B cell (primary cell): ENCODE measurements at regions of chr12 and their contacts with region 1.

Region 1: DNA sequence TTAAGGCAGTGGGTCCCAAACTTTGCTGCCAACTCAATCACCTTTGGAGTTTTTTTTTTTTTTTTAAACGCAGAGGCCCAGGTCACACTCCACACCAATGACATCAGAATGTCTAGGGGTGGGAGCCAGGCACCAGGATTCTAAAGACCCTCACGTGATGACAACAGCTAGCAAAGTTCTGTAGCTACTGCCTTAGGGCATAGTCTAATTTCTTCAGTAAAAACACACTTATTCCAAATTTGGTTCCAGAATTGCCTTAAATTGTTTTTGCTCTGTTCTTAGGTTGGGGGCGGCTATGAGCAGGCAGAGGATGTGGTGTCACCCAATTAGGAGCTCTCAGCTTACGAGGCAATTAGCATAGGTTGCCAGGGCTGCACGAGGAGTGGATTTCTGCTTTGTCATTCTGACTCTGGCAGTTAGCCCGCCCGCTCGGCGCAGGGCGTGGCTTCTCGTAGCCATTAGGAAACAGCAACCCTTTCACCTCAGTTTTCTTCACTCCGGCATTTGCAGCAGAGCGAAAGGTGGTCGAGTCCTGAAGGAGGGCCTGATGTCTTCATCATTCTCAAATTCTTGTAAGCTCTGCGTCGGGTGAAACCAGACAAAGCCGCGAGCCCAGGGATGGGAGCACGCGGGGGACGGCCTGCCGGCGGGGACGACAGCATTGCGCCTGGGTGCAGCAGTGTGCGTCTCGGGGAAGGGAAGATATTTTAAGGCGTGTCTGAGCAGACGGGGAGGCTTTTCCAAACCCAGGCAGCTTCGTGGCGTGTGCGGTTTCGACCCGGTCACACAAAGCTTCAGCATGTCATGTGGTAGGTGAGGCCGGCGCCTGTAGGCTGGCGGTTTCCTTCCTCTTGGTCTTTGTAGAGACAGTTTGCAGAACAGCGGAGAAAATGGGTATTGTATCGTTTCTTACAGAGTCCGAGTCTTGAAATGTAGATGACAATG is 16.7 kb upstream of the EID3 start:
- DNase-seq: peak; percentile 90
- ATAC-seq: peak; percentile 83
- H3K4me3 ChIP-seq: peak overlapping the region; percentile 61 to 93 (median 82)
- H3K4me3 Mint-ChIP-seq: peak overlapping the region; percentile 100
- H3K27ac ChIP-seq: peak overlapping the region; percentile 75 to 79
- H3K27ac Mint-ChIP-seq: peak overlapping the region; percentile 99
- H3K4me1 ChIP-seq: peaks cover 25 to 29% of the 10 kb centered on the region in 2 donors
- H3K4me1 Mint-ChIP-seq: peaks cover 37% of the 10 kb centered on the region
- H3K27me3 ChIP-seq: no peaks in the 10 kb centered on the region
- H3K27me3 Mint-ChIP-seq: no peaks in the 10 kb centered on the region
- CTCF ChIP-seq: no peak

Region 2: DNA sequence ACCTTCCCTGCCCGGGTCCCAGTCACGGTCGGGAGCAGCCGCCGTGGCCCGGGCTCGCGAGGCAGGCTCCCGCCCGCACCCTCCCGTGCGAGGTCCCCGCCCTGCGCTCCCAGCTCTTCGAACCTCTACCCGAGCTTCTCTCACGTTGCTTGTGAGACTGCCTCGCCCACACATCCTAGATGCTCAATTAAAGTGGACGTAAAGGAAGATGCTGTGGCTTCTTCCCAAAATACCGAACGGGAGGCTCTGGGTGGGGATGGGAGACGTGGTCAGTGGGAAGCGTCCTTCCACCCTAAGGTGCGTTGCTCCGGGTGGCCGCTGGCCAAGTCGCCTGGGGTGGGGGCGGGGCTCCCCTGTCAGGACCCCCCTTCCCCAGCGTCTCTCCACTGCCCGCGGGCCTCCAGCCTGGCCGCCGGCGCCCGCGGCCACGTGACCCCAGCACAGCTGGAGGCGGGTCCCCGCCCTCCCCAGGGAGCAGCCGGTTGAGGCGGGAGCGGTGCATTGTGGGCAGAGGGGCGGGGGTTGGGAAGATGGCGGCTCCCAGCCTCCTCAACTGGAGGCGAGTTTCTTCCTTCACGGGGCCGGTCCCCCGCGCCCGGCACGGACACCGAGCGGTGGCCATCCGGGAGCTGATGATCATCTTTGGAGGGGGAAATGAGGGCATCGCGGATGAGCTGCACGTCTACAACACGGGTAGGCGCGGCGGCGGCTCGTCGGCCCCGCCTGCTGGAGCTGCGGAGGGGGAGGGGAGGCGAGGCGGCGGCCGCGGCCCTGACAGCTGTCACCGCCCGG is 222.6 kb before region 1 on chr12 and contains the start of gene HCFC2:
- CTCF ChIA-PET with region 1: no interaction called
- POLR2A ChIA-PET with region 1: no interaction called
- intact Hi-C with region 1: loop called (anchors 5 kb)
- DNase-seq: peak; percentile 94
- ATAC-seq: peak; percentile 92
- H3K4me3 ChIP-seq: peak within 1 kb of the TSS; percentile 80 to 95 (median 85)
- H3K4me3 Mint-ChIP-seq: peak within 1 kb of the TSS; percentile 94
- H3K27ac ChIP-seq: peak within 1 kb of the TSS; percentile 36 to 79
- H3K27ac Mint-ChIP-seq: peak within 1 kb of the TSS; percentile 93
- H3K4me1 ChIP-seq: peaks cover 10 to 14% of the 10 kb centered on the region in 2 donors
- H3K4me1 Mint-ChIP-seq: peaks cover 17% of the 10 kb centered on the region
- H3K27me3 ChIP-seq: no peaks in the 10 kb centered on the region
- H3K27me3 Mint-ChIP-seq: peaks cover 9% of the 10 kb centered on the region
- CTCF ChIP-seq: no peak
- total RNA-seq, gene HCFC2: 10.5 and 11.6 TPM in 2 replicates

Region 3: DNA sequence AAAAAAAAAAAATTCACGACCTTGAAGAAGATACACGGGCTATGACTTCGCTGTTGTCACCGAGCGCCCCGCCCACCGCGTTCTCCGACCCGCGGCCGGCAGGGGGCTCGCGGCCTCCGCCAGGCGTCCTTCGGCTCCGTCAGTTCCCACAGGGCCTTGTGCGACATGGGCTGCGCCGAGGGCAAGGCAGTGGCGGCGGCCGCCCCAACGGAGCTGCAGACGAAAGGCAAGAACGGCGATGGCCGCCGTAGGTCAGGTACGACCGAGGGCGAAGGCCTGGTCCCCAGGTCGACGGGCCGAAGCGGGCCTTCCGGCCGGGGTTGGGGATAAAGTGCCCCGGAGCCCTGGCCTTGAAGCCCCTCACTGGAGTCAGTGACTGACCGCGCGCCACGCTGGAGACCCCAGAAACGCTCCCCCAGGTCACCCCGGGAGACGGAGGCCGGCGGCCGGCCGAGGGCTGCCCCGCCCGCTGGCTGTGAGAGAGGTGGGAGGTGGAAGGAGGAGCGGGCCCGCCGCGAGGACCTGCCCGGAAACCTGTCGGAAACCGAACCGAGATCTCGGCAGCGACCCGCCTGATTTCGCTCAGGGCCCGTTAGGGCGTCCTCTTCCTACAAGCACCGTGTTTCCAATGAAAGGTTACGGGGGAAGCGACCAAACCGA is 71.0 kb before region 1 on chr12 and contains the start of gene TXNRD1:
- CTCF ChIA-PET with region 1: interaction called, 7 read pairs
- POLR2A ChIA-PET with region 1: no interaction called
- intact Hi-C with region 1: loop called (anchors 1 kb)
- DNase-seq: peak; percentile 91
- ATAC-seq: peak; percentile 99
- H3K4me3 ChIP-seq: peak within 1 kb of the TSS; percentile 44 to 71 (median 61)
- H3K4me3 Mint-ChIP-seq: peak within 1 kb of the TSS; percentile 86
- H3K27ac ChIP-seq: peak within 1 kb of the TSS in 1 of 2 donors; percentile 55
- H3K27ac Mint-ChIP-seq: peak within 1 kb of the TSS; percentile 84
- H3K4me1 ChIP-seq: peaks cover 4 to 12% of the 10 kb centered on the region in 2 donors
- H3K4me1 Mint-ChIP-seq: peaks cover 15% of the 10 kb centered on the region
- H3K27me3 ChIP-seq: peaks cover 0 to 4% (median 1%) of the 10 kb centered on the region in 4 experiments
- H3K27me3 Mint-ChIP-seq: peaks cover 15% of the 10 kb centered on the region
- CTCF ChIP-seq: peak; percentile 91
- total RNA-seq, gene TXNRD1: 44.6 and 48.1 TPM in 2 replicates

Region 4: GRCh38 chr12:104303538-104304151 is 16.8 kb after region 1 on chr12 and contains the start of gene EID3:
- CTCF ChIA-PET with region 1: interaction called, 24 read pairs
- POLR2A ChIA-PET with region 1: interaction called, 22 read pairs
- intact Hi-C with region 1: loop called (anchors 1 kb)
- DNase-seq: peak; percentile 89
- ATAC-seq: peak; percentile 97
- H3K4me3 ChIP-seq: peak within 1 kb of the TSS; percentile 19 to 74 (median 62)
- H3K4me3 Mint-ChIP-seq: peak within 1 kb of the TSS; percentile 89
- H3K27ac ChIP-seq: peak within 1 kb of the TSS; percentile 54 to 74
- H3K27ac Mint-ChIP-seq: peak within 1 kb of the TSS; percentile 86
- H3K4me1 ChIP-seq: peaks cover 15 to 19% of the 10 kb centered on the region in 2 donors
- H3K4me1 Mint-ChIP-seq: peaks cover 52% of the 10 kb centered on the region
- H3K27me3 ChIP-seq: no peaks in the 10 kb centered on the region
- H3K27me3 Mint-ChIP-seq: no peaks in the 10 kb centered on the region
- CTCF ChIP-seq: no peak
- total RNA-seq, gene EID3: 9.2 and 9.4 TPM in 2 replicates

Region 5: DNA sequence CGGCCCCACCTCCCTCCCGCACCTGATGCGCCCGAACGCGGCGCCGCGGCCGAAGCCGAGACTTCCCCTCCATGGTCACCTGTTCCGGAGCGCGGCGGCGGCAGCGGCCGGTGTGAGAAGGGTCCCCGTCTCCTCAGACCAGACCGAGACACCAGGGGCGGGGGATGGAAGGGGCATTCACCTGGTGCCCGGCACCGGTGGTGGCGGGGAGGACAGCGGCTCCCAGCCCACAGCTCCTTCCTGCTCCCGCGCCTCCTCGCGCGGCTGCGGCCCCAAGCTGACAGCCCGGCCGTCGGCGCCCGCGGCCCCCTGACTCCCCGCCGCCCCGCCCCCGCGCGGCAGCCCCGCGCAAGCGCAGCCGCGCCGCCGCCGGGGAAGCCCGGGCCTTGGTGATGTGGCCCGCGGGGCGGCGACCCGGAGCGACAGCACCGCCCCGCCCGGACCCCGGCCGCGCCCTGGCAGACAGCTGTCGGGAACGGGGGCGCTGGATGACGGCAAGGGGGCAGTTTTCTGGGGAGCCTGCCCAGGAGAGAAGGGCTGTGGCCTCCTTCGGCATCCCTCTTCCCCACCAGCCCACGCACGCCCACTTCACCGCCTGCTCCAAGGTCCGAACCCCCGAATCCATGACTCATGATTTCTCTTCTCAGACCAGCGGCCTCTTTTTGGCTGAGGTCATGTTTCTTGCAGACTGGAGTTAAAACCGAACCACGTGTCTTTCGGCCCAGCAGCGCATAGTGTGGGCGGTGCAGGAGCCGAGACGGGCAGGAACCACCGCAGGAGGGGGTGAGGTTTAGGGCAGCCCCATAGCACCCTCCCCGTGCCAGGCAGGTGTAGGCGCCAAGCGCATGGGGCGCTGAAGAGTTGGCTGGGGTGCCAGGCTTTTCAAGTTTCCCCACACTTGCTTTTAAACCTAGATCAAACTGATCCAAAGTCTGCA is 671.5 kb after region 1 on chr12 and contains the start of gene SLC41A2:
- CTCF ChIA-PET with region 1: interaction called, 3 read pairs
- POLR2A ChIA-PET with region 1: interaction called, 4 read pairs
- intact Hi-C with region 1: loop called (anchors 5 kb)
- DNase-seq: peak; percentile 91
- ATAC-seq: peak; percentile 84
- H3K4me3 ChIP-seq: peak within 1 kb of the TSS; percentile 57 to 80 (median 75)
- H3K4me3 Mint-ChIP-seq: peak within 1 kb of the TSS; percentile 95
- H3K27ac ChIP-seq: peak within 1 kb of the TSS; percentile 79 to 80
- H3K27ac Mint-ChIP-seq: peak within 1 kb of the TSS; percentile 93
- H3K4me1 ChIP-seq: peaks cover 13 to 16% of the 10 kb centered on the region in 2 donors
- H3K4me1 Mint-ChIP-seq: peaks cover 23% of the 10 kb centered on the region
- H3K27me3 ChIP-seq: peaks cover 0 to 2% (median 0%) of the 10 kb centered on the region in 4 experiments
- H3K27me3 Mint-ChIP-seq: peaks cover 6% of the 10 kb centered on the region
- CTCF ChIP-seq: peak; percentile 48
- total RNA-seq, gene SLC41A2: 13.0 TPM in 2 replicates

Region 6: GRCh38 chr12:105214623-105215382 is 928.0 kb after region 1 on chr12:
- CTCF ChIA-PET with region 1: no interaction called
- POLR2A ChIA-PET with region 1: no interaction called
- intact Hi-C with region 1: no loop called
- DNase-seq: no peak
- ATAC-seq: no peak
- H3K4me3 ChIP-seq: no peak overlapping the region
- H3K4me3 Mint-ChIP-seq: no peak overlapping the region
- H3K27ac ChIP-seq: no peak overlapping the region
- H3K27ac Mint-ChIP-seq: no peak overlapping the region
- H3K4me1 ChIP-seq: no peaks in the 10 kb centered on the region
- H3K4me1 Mint-ChIP-seq: no peaks in the 10 kb centered on the region
- H3K27me3 ChIP-seq: no peaks in the 10 kb centered on the region
- H3K27me3 Mint-ChIP-seq: no peaks in the 10 kb centered on the region
- CTCF ChIP-seq: no peak